ENCODE measurements at regions of chr7 and their contacts with region 1.

Region 1: GRCh38 chr7:36315309-36316133 is 74.1 kb upstream of the ANLN start:
- DNase-seq: no peak
- H3K4me3 ChIP-seq: no peak overlapping the region
- H3K27ac ChIP-seq: no peak overlapping the region
- H3K4me1 ChIP-seq: no peaks in the 10 kb centered on the region
- H3K27me3 ChIP-seq: no peaks in the 10 kb centered on the region
- CTCF ChIP-seq: no peak

Region 2: GRCh38 chr7:35985126-35985754 is 330.3 kb before region 1 on chr7:
- CTCF ChIA-PET with region 1: interaction called, 5 read pairs
- POLR2A ChIA-PET with region 1: no interaction called
- intact Hi-C with region 1: loop called (anchors 1 kb)
- DNase-seq: peak; percentile 57 to 84
- H3K4me3 ChIP-seq: no peak overlapping the region
- H3K27ac ChIP-seq: no peak overlapping the region
- H3K4me1 ChIP-seq: peaks cover 18% of the 10 kb centered on the region
- H3K27me3 ChIP-seq: no peaks in the 10 kb centered on the region
- CTCF ChIP-seq: peak; percentile 99

Region 3: GRCh38 chr7:36547416-36547815 is 231.9 kb after region 1 on chr7:
- CTCF ChIA-PET with region 1: no interaction called
- POLR2A ChIA-PET with region 1: no interaction called
- intact Hi-C with region 1: no loop called
- DNase-seq: no peak
- H3K4me3 ChIP-seq: no peak overlapping the region
- H3K27ac ChIP-seq: no peak overlapping the region
- H3K4me1 ChIP-seq: no peaks in the 10 kb centered on the region
- H3K27me3 ChIP-seq: peaks cover 64% of the 10 kb centered on the region
- CTCF ChIP-seq: no peak

Measured in PC-9 (cell line).